BJ (cell line): ENCODE measurements at regions of chr2 and their contacts with region 1.

Region 1: DNA sequence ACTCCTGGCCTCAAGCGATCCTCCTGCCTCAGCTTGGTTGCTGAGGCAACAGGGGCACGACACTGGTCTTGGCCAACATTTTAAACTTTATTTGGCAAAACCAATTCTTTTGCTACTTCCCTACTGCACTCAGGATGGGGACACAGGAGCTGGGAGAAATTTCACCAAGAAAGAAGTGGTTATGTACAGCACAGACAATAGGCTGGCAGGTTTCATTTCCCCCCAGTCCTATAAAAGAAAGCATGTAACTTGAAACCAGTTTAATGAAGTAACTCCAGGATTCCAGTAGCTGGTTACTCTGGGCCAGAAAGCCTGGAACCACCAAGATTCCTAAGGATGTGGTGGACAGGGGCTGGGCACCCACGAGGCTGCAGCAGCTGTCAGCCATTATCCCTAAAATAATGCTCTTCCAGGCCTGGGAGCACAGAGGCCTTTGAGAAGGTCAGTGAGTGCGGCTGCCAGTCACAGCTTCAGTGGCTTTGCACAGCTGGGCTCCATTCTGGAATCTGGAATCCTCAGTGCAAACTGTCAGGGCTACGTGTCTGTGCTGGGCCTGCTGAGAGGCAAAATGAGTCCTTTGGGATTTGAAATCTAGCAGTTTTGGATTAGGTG is 142.3 kb upstream of the ITGA6 start:
- DNase-seq: peak; percentile 53
- H3K4me3 ChIP-seq: no peak overlapping the region
- H3K27me3 ChIP-seq: no peaks in the 10 kb centered on the region
- CTCF ChIP-seq: no peak

Region 2: GRCh38 chr2:172131713-172132555 is 153.2 kb before region 1 on chr2:
- CTCF ChIA-PET with region 1: no interaction called
- POLR2A ChIA-PET with region 1: no interaction called
- DNase-seq: no peak
- H3K4me3 ChIP-seq: no peak overlapping the region
- H3K27me3 ChIP-seq: no peaks in the 10 kb centered on the region
- CTCF ChIP-seq: no peak

Region 3: DNA sequence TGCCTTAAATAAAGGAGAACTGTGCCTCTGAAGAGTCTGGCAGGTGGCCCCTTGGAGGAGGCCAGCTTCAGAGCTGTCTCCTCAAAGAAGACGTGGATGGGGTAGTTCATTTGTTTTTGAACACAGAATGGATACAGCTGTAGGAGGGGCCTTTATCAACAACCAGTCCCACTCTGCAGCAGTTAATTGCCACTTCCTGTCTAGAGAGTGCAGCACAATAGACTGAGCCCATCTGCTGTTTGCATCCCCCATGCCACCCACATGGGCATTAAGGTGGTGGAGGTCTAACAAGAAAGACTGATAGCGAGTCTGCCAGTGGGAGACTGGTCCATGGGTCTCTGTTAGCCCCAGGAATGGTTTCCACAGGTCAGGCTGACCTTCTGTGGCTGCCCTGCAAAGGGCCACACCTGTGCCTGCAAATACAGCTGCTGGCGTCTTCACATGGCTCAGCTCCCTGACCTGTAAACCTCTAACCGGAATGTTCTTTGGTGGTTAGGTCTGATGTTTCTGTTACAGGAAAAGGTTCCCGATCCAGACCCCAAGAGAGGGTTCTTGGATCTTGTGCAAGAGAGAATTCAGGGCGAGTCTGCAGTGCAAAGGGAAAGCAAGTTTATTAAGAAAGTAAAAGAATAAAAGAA is 11.1 kb before region 1 on chr2:
- CTCF ChIA-PET with region 1: interaction called, 14 read pairs
- POLR2A ChIA-PET with region 1: no interaction called
- DNase-seq: no peak
- H3K4me3 ChIP-seq: no peak overlapping the region
- H3K27me3 ChIP-seq: no peaks in the 10 kb centered on the region
- CTCF ChIP-seq: no peak